Head of caudate nucleus (tissue), 42 donors: ENCODE measurements at regions of chr2 and their contacts with region 1.

Region 1: GRCh38 chr2:151523850-151524249 is 114.1 kb downstream of the RIF1 start:
- DNase-seq: no peak

Region 2: GRCh38 chr2:150449871-150450270 is 1074.0 kb before region 1 on chr2:
- intact Hi-C with region 1: loop called (anchors 10 kb)
- DNase-seq: no peak

Region 3: DNA sequence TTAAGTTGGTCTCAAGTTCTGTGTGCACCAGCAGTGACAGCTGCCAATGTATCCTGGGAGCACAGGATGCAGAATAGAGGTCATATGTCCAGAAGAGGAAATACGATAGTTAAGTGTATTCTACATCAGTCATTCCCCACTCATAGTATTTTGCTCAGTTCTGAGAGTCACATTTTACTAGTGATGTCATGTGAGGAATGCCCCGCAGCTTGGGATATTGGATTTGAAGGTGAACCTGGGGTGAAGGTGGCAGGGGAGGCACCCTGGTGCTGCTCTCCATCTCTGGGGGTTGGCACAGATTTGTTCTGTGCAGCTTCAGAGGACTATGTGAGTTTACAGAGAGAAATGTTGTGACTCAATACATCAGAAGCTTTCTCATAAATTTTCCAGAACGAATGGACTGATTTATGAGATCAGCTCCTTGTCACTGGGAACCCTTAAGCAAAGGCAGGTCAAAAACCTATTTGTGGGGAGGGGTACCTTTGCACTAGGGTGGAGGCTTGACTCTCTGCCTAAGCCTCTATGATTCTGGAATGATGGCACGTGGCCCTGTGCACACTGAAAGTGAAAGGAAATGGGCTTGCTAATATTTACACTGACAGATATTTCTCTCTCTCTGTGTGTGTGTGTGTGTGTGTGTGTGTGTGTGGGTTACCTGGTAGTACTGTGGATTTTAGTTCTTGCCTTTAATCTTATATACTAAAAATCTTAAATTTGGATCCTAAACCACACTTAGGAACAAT is 114.5 kb after region 1 on chr2:
- intact Hi-C with region 1: no loop called
- DNase-seq: no peak

Region 4: DNA sequence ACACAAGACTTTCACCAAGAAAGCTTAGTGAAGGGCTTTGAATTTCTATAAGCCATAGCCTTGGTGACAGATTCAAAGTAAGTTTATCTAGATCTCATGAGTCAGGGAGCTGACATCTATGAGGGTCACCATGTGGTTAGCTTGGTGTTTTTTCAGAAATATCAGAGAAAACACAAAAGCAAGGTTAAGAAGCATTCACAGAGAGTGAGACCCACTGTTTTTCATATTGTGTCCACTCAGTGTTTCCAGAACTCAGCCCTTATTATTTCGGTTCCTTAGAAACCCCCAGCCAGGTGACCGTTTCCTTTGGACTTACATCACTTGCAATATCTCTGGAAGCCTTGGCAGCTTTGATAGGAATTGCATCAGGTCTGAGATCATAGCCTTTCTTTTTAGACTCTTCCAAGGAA is 133.8 kb after region 1 on chr2:
- intact Hi-C with region 1: no loop called
- DNase-seq: no peak

Region 5: GRCh38 chr2:151819920-151820319 is 296.1 kb after region 1 on chr2:
- intact Hi-C with region 1: no loop called
- DNase-seq: no peak